Activated B cell treated with CpG ODN at 0.5 μM for 24 hours (primary cell): ENCODE measurements at regions of chr6 and their contacts with region 1.

Region 1: DNA sequence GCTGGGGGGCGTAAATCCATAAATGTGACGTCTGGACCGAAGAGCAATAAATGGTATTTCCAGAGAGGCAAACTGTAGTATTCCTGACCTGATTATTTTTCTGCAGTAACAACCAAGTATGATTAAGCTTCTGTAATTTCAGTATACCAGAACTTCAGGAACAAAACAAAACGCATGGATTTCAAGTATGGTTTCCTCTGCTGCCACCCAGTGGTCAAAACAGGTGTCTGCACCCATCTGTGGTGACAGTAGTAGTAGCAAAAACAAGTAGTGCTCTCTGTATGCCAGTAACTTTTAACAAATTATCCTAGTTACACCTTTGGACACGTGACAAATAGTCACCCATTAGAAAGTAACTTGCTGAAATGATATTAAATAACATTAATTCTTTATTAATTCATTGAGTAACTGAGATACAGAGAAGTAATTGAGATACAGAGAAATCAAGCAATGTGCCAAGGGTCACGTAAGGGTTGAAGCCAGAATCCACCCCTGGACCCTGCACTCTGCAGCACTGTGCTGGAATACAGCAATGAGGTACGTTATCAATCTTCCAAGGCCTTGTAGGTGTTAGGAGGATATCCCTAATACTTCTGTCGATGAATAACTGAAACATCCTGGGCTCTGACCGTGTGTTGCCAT is 7.9 kb downstream of the CALHM4 start:
- DNase-seq: peak; percentile 37
- ATAC-seq: peak; percentile 81
- H3K4me3 Mint-ChIP-seq: no peak overlapping the region
- H3K27ac Mint-ChIP-seq: no peak overlapping the region
- H3K4me1 Mint-ChIP-seq: peaks cover 2% of the 10 kb centered on the region
- H3K27me3 Mint-ChIP-seq: peaks cover 14% of the 10 kb centered on the region
- CTCF ChIP-seq: peak; percentile 50

Region 2: DNA sequence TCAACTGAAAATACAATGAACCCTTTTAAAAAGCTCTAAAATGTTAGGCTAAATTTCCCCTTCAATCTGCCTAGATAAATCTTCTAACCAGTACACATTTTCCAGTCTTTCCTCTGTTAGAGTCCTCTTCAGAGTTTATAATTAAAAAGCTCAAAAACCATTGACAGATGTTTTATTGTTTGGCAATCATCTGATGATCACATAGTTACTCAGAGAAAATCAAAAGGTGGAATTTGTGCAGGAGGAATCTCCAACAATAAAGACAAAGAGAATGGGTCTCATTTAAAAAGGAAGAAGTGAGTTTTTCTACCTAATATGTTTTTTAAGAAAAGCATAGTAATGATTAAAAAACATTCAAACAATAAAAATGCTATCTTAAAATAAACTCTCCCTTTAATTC is 19.1 kb before region 1 on chr6:
- CTCF ChIA-PET with region 1: interaction called, 18 read pairs
- POLR2A ChIA-PET with region 1: no interaction called
- intact Hi-C with region 1: no loop called
- DNase-seq: no peak
- ATAC-seq: no peak
- H3K4me3 Mint-ChIP-seq: no peak overlapping the region
- H3K27ac Mint-ChIP-seq: no peak overlapping the region
- H3K4me1 Mint-ChIP-seq: no peaks in the 10 kb centered on the region
- H3K27me3 Mint-ChIP-seq: peaks cover 18% of the 10 kb centered on the region
- CTCF ChIP-seq: no peak

Region 3: DNA sequence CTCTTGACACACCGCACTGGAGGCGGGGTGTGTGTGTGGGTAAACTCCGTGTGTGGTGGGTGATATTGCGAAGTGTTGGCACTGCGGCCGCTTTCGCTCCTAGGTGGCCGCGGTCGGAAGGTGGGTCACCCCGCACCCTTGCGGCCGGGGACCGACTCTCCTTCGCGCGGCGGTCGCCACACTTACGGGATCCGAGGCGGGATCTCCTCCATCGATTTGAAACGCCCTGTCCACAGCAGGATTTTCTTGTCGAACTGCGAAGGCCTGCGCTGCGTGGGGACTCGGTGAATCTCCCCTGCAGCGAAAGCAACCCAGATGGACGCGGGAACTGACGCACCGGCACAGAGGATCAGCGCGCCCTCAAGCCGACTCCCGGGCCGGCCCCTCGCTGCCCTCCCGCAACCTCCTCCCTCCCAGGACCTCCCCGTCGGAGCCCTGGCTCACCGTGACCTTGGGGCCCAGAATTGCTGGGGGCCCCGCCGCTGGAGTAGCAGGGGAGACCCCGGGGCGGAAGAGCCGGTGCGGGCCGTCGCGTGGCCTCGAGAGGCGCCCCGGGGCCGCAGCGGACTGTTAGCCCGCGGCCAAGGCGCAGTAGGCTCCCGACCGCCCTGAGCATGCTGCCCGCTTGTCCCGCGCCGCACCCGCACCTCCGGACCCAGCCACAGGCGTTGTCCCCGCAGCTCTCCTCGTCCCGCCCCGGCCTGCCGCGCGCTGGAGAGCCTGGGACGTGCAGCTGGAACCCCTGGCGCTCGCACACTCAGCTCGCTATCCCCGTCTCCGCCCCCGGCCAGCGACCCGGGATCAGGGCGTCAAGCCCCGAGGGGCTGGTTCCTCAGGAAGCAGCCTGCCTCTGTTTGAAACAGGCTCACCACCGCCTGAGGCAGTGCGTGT is 203.7 kb after region 1 on chr6 and contains the start of gene FAM162B:
- CTCF ChIA-PET with region 1: no interaction called
- POLR2A ChIA-PET with region 1: no interaction called
- intact Hi-C with region 1: no loop called
- DNase-seq: no peak
- ATAC-seq: no peak
- H3K4me3 Mint-ChIP-seq: peak within 1 kb of the TSS; percentile 60
- H3K27ac Mint-ChIP-seq: no peak within 1 kb of the TSS
- H3K4me1 Mint-ChIP-seq: peaks cover 10% of the 10 kb centered on the region
- H3K27me3 Mint-ChIP-seq: peaks cover 37% of the 10 kb centered on the region
- CTCF ChIP-seq: no peak
- total RNA-seq, gene FAM162B: not detected in 2 replicates

Region 4: GRCh38 chr6:116884530-116884929 is 323.0 kb after region 1 on chr6:
- CTCF ChIA-PET with region 1: no interaction called
- POLR2A ChIA-PET with region 1: no interaction called
- intact Hi-C with region 1: no loop called
- DNase-seq: no peak
- ATAC-seq: no peak
- H3K4me3 Mint-ChIP-seq: no peak overlapping the region
- H3K27ac Mint-ChIP-seq: no peak overlapping the region
- H3K4me1 Mint-ChIP-seq: no peaks in the 10 kb centered on the region
- H3K27me3 Mint-ChIP-seq: no peaks in the 10 kb centered on the region
- CTCF ChIP-seq: no peak